Activated CD4-positive, alpha-beta T cell treated with anti-CD3 and anti-CD28 coated beads for 36 hours (primary cell): ENCODE measurements at regions of chr6 and their contacts with region 1.

Region 1: GRCh38 chr6:73451223-73452107 is 632 bp downstream of the CGAS start:
- DNase-seq: peak; percentile 66
- ATAC-seq: peak; percentile 55
- H3K4me3 Mint-ChIP-seq: peak overlapping the region; percentile 87
- H3K27ac Mint-ChIP-seq: peak overlapping the region; percentile 90
- H3K4me1 Mint-ChIP-seq: peaks cover 32% of the 10 kb centered on the region
- H3K27me3 Mint-ChIP-seq: no peaks in the 10 kb centered on the region

Region 2: GRCh38 chr6:73262671-73263569 is 188.5 kb before region 1 on chr6 and contains the start of gene KHDC1:
- CTCF ChIA-PET with region 1: interaction called, 3 read pairs
- POLR2A ChIA-PET with region 1: no interaction called
- intact Hi-C with region 1: loop called in 1 of 2 experiments (anchors 5 kb)
- DNase-seq: peak; percentile 74
- ATAC-seq: peak; percentile 89
- H3K4me3 Mint-ChIP-seq: peak within 1 kb of the TSS; percentile 89
- H3K27ac Mint-ChIP-seq: peak within 1 kb of the TSS; percentile 93
- H3K4me1 Mint-ChIP-seq: peaks cover 26% of the 10 kb centered on the region
- H3K27me3 Mint-ChIP-seq: no peaks in the 10 kb centered on the region
- total RNA-seq, gene KHDC1: 2.8 to 4.2 TPM

Region 3: GRCh38 chr6:73388800-73389512 is 62.5 kb before region 1 on chr6:
- CTCF ChIA-PET with region 1: no interaction called
- POLR2A ChIA-PET with region 1: no interaction called
- intact Hi-C with region 1: loop called in 1 of 2 experiments (anchors 2 kb)
- DNase-seq: peak; percentile 73
- ATAC-seq: peak; percentile 86
- H3K4me3 Mint-ChIP-seq: peak overlapping the region; percentile 76
- H3K27ac Mint-ChIP-seq: peak overlapping the region; percentile 51
- H3K4me1 Mint-ChIP-seq: peaks cover 11% of the 10 kb centered on the region
- H3K27me3 Mint-ChIP-seq: no peaks in the 10 kb centered on the region

Region 4: DNA sequence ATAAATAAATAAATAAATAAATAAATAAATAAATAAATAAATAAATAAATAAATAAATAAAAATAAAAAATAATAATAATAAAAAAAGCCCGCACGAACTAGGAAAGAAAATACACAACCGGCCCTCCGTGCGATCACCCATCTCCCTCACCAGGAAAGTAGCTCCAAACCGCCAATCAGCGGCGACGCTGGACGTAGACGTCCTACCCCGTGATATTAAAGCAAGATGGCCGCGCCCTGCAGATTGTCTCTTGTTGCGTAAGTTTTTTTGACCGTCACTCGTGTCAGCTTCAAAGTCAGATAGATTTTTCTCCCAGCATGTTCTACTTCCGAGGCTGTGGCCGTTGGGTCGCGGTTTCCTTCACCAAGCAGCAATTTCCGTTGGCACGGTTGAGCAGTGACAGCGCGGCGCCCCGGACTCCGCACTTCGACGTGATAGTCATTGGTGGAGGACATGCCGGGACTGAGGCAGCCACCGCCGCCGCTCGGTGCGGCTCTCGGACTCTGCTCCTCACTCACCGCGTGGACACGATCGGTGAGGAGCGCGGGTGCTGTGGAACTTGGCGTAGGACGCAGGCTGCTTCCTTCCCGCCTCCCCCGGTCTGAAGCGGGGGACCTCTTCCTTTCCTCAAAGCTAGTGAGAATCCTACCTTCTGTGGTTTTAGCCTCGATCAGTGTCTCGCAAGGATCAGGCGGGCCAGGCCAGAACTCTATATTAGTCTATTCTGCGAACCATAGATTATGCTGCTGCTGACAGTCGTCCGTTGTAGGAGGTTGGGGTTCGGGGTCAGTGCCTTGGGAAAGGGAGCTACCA is 10.3 kb after region 1 on chr6 and contains the start of gene MTO1:
- CTCF ChIA-PET with region 1: interaction called, 20 read pairs
- POLR2A ChIA-PET with region 1: interaction called, 30 read pairs
- intact Hi-C with region 1: loop called (anchors 1 kb)
- DNase-seq: peak; percentile 92
- ATAC-seq: peak; percentile 96
- H3K4me3 Mint-ChIP-seq: peak within 1 kb of the TSS; percentile 93
- H3K27ac Mint-ChIP-seq: peak within 1 kb of the TSS; percentile 100
- H3K4me1 Mint-ChIP-seq: peaks cover 37% of the 10 kb centered on the region
- H3K27me3 Mint-ChIP-seq: no peaks in the 10 kb centered on the region
- total RNA-seq, gene MTO1: 45.0 to 49.7 TPM

Region 5: GRCh38 chr6:73532293-73532692 is 80.8 kb after region 1 on chr6:
- CTCF ChIA-PET with region 1: no interaction called
- POLR2A ChIA-PET with region 1: no interaction called
- intact Hi-C with region 1: no loop called
- DNase-seq: no peak
- ATAC-seq: no peak
- H3K4me3 Mint-ChIP-seq: no peak overlapping the region
- H3K27ac Mint-ChIP-seq: no peak overlapping the region
- H3K4me1 Mint-ChIP-seq: no peaks in the 10 kb centered on the region
- H3K27me3 Mint-ChIP-seq: no peaks in the 10 kb centered on the region

Region 6: DNA sequence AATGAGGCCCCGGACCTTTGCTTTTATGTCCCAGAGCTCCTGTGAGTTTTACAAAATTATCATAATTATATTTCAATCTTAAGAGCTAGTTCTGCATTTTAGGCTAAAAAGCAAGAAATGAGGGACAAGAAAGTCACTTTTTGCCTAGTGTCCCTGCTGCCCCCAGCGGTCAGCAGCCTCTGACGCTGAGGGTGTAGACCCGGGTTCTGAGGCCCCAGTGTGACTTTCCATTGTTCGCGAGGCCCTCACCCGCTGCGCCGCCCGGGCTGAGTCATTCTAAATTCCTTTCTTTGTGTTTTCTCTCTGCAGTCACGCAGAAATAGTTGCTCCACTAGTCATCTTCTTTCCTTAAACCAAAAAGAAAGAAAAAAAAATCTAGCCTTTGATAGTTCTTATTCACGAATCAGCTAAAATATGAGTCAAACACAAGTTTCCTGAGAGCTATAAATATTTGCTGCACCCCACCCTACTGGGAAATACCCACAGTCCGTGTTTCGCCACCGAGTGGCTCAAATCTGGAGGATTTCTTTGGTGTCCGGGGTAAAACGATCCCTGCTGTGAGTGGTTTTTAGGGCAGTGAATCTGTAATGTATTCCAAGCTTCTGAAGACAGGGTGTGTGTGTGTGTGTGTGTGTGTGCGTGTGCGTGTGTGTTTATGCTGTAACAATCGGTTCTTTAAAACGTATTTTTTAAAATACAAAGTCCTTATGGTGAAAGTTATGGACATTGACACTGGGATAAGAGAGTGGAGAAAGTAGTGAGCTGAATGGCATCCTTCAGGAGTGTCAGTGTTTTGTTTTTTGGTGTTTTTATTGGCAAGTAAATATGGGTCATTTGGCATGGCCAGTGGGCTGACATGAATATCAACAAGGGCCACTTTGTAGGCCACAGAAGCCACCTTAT is 129.0 kb after region 1 on chr6:
- CTCF ChIA-PET with region 1: interaction called, 3 read pairs
- POLR2A ChIA-PET with region 1: no interaction called
- intact Hi-C with region 1: loop called in 1 of 2 experiments (anchors 10 kb)
- DNase-seq: peak; percentile 89
- ATAC-seq: peak; percentile 92
- H3K4me3 Mint-ChIP-seq: peak overlapping the region; percentile 60
- H3K27ac Mint-ChIP-seq: peak overlapping the region; percentile 99
- H3K4me1 Mint-ChIP-seq: peaks cover 29% of the 10 kb centered on the region
- H3K27me3 Mint-ChIP-seq: no peaks in the 10 kb centered on the region

Region 7: GRCh38 chr6:73610444-73611275 is 159.2 kb after region 1 on chr6:
- CTCF ChIA-PET with region 1: no interaction called
- POLR2A ChIA-PET with region 1: no interaction called
- intact Hi-C with region 1: loop called in 1 of 2 experiments (anchors 2 kb)
- DNase-seq: no peak
- ATAC-seq: peak; percentile 51
- H3K4me3 Mint-ChIP-seq: no peak overlapping the region
- H3K27ac Mint-ChIP-seq: no peak overlapping the region
- H3K4me1 Mint-ChIP-seq: peaks cover 7% of the 10 kb centered on the region
- H3K27me3 Mint-ChIP-seq: no peaks in the 10 kb centered on the region